T-cell (primary cell): ENCODE measurements at regions of chr11 and their contacts with region 1.

Region 1: GRCh38 chr11:118216621-118217481 is 8.0 kb downstream of the JAML start:
- DNase-seq: peak in 11 of 35 experiments; percentile 10 to 68 (median 19)
- ATAC-seq: peak; percentile 73 to 75 (median 74)
- H3K4me3 ChIP-seq: peak overlapping the region in 1 of 2 donors; percentile 26
- H3K4me3 Mint-ChIP-seq: peak overlapping the region; percentile 76 to 91 (median 80)
- H3K27ac ChIP-seq: peak overlapping the region; percentile 76
- H3K27ac Mint-ChIP-seq: peak overlapping the region; percentile 91 to 95
- H3K4me1 ChIP-seq: peaks cover 55 to 81% of the 10 kb centered on the region in 2 experiments
- H3K4me1 Mint-ChIP-seq: peaks cover 97 to 99% (median 98%) of the 10 kb centered on the region in 3 donors
- H3K27me3 ChIP-seq: no peaks in the 10 kb centered on the region
- H3K27me3 Mint-ChIP-seq: no peaks in the 10 kb centered on the region

Region 2: DNA sequence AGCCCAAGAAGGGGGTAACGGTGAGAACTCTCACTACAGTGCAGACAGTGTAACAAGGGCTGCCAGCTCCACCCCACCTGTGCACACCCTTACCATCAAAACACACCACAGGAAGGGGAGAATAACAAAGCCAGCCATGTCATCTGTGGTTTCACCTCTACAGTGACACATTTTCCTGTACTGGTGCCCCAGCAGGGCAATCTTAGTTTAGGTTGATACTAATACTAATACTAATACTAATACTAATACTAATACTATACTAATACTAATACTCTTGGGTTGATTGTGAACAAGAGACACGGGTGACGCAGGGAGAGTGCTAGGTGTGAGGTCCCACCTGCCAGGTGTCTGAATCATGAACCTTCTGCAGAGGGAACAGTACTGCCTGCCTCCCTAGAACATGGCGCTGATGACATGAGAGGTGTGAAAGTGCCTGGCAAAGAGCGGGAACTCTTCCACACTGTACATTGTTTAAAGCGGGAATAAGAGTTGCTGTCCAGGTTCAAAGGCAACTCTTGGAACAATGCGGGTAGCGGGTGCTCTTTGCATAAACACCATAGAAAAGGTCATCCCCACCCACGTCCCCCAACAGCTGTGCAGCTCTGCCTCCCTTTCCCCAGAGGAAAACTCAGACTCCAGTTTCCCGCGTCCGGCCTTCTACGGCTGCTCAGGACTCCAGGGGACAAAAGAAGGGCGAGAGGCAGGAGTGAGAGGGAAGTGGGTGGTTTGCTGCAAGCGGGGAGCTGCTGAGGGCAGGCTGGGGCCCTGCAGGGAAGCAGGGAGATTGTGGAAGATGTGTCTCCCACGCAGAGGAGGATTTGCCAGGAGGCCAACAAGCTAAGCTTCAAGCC is 165.0 kb before region 1 on chr11:
- CTCF ChIA-PET with region 1: no interaction called
- POLR2A ChIA-PET with region 1: no interaction called
- DNase-seq: peak; percentile 57 to 90 (median 78)
- ATAC-seq: peak; percentile 96 to 97 (median 97)
- H3K4me3 ChIP-seq: no peak overlapping the region
- H3K4me3 Mint-ChIP-seq: peak overlapping the region; percentile 9 to 63 (median 59)
- H3K27ac ChIP-seq: peak overlapping the region; percentile 76
- H3K27ac Mint-ChIP-seq: peak overlapping the region; percentile 97 to 99
- H3K4me1 ChIP-seq: peaks cover 36 to 67% of the 10 kb centered on the region in 2 experiments
- H3K4me1 Mint-ChIP-seq: peaks cover 60 to 62% (median 61%) of the 10 kb centered on the region in 3 donors
- H3K27me3 ChIP-seq: no peaks in the 10 kb centered on the region
- H3K27me3 Mint-ChIP-seq: peaks cover 0 to 1% of the 10 kb centered on the region in 2 donors

Region 3: GRCh38 chr11:118735203-118735602 is 518.4 kb after region 1 on chr11:
- CTCF ChIA-PET with region 1: no interaction called
- POLR2A ChIA-PET with region 1: interaction called in 1 of 2 experiments, 10 read pairs
- DNase-seq: no peak
- ATAC-seq: no peak
- H3K4me3 ChIP-seq: no peak overlapping the region
- H3K4me3 Mint-ChIP-seq: no peak overlapping the region
- H3K27ac ChIP-seq: no peak overlapping the region
- H3K27ac Mint-ChIP-seq: no peak overlapping the region
- H3K4me1 ChIP-seq: no peaks in the 10 kb centered on the region
- H3K4me1 Mint-ChIP-seq: no peaks in the 10 kb centered on the region
- H3K27me3 ChIP-seq: no peaks in the 10 kb centered on the region
- H3K27me3 Mint-ChIP-seq: peaks cover 0 to 3% of the 10 kb centered on the region in 2 donors